Esophagus squamous epithelium (tissue), 5 donors: ENCODE measurements at regions of chr4 and their contacts with region 1.

Region 1: DNA sequence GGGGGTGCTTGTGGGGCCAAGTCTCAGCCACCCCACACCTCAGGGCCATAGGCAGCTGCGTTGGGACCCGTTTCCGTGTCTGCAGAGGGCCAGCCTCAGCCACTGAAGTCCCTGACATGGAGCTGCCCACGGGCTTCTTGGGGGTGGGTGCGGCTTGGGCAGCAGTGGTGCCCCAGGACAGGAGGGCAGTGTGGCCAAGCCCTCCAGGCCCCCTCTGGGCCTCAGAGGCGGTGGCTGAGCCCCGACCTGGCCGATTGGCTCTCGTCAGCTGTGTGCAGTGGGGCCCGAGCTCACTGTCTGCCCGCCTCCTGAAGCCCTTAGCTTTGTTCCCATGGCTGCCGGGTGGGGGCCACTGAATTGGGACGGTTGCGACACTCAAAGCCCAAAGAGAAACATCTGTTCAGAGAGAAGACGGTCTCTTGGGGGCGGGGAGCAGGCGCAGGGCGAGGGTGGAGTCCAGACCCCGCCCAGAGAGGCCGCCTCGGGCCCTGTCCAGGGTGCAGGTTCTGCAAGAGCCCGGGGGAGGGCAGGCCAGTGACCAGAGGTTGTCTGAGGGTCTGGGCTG is 9.1 kb downstream of the FGFR3 start:
- DNase-seq: no peak
- H3K4me3 ChIP-seq: no peak overlapping the region
- H3K27ac ChIP-seq: peak overlapping the region in 1 of 4 donors; percentile 13
- H3K4me1 ChIP-seq: peaks cover 0 to 71% (median 17%) of the 10 kb centered on the region in 3 donors
- H3K27me3 ChIP-seq: peaks cover 0 to 25% (median 0%) of the 10 kb centered on the region in 4 donors
- CTCF ChIP-seq: no peak
- POLR2A ChIP-seq: no peak

Region 2: DNA sequence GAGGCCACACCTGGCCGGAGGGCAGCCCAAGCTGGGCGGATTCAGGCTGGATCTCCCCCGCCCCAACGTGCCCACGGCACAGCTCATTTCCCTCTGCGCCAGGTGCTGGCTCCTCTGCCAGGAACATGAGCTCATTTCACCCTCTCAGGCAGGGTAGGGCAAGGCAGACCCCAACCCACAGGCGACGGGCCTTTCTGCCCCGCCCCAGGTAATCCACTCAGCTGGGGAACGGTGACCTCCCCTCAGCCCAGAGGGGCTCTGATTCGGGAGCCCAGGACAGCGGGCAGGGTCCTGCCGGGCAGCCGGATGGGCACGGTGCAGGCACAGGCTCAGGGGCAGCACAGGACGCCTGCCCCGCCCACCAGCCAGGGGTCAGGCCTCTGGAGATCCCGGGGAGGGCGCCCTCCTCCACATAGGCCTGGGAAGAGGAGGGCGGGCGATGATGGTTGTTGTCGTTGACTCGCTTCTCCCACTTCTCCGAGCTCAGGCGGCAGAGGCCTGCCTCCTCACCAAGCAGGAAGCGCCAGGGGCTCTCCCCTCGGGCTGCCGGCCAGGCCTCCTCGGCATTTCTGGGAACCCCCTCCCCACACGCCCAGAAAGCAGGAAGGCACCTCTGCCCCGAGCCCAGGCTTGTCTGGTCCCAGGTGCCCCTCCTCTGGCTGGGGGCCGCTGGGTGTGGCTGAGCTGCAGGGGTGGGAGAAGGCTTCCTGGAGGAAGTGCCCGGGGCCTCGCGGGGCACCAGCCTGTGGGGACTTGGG is 49.8 kb before region 1 on chr4:
- intact Hi-C with region 1: loop called (anchors 5 kb)
- DNase-seq: no peak
- H3K4me3 ChIP-seq: peak overlapping the region in 3 of 4 donors; percentile 2 to 37 (median 9)
- H3K27ac ChIP-seq: peak overlapping the region; percentile 82 to 94 (median 90)
- H3K4me1 ChIP-seq: peaks cover 71 to 93% (median 71%) of the 10 kb centered on the region in 3 donors
- H3K27me3 ChIP-seq: peaks cover 0 to 5% (median 0%) of the 10 kb centered on the region in 4 donors
- CTCF ChIP-seq: peak in 3 of 6 experiments; percentile 7 to 33 (median 29)
- POLR2A ChIP-seq: no peak

Region 3: DNA sequence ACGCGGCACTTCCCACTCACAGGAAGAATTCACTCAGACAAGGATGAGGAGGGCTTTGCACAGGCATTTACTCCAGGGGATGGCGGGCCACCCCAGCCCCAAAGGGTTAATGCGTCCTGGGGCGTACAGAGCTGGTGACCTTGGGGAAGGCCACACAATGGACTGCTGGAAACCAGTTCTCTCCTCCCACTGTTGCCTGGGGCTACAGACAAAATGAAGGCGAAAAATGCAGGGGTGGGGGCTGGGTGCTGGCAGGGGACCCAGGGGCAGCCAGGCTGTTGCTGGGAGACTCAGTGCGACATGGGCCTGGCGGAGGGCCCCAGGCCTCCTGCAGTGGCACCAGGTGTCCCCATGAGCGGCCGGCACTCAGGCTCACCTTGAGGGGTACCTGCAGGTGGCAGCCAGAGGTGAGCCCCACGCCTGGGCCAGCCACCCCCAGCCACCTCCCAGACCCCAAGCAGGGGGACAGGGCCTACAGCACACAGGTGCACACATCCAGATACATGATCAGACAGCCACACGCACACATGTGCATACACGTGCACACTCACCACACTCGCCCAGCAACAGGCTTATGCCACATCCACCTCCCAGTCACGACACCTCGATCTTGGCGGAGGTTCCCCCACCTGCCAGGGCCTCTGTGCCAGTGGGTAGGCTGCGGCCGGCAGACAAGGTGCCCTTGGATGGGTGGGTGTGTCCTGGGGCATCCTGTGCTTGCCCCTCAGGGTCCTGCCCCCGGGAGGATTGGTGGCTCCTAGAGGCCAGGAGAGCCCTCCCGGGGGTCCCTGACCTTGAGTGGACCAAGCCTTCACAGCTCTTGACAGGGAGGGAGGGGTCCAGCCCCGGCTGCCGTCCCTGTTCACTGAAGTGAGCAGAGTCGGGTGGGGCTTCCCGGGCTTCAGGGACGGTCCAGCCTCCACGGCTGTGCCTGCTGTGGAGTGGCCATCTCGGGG is 270.0 kb after region 1 on chr4:
- intact Hi-C with region 1: no loop called
- DNase-seq: no peak
- H3K4me3 ChIP-seq: no peak overlapping the region
- H3K27ac ChIP-seq: no peak overlapping the region
- H3K4me1 ChIP-seq: no peaks in the 10 kb centered on the region
- H3K27me3 ChIP-seq: peaks cover 0 to 41% (median 0%) of the 10 kb centered on the region in 4 donors
- CTCF ChIP-seq: no peak
- POLR2A ChIP-seq: no peak

Region 4: DNA sequence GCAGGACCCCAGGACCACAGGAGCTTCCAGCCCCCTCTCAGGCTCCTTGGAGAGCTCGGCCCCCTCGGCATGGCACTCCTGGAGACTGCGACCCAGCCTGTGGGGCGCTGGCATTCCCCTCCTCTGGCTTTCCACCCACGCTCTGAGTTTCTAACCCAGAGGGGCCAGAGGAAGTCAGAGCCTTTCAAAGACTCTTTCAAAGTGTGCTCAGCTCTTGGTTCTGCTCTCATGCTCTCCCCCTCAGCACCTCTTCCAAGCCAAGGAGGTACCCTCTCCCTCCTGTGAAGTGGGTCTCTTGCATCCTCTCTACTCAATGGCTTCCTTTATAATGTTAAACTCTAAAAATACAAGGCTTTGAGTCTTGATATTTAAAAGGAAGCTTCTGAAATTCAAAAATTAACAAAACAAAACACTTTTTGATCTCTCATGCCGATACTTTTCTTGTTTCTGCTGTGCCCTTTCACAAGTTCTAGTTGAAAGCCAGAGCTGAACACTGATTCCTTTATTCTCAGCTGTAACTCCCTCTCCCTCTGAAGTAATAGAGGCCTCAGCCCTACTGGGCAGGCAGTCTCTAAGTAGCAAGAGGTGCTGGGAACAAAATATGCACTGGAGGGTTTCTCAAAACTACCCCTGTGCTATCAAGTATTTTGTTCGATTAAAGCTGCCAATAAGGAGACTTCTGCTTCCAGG is 339.7 kb after region 1 on chr4:
- intact Hi-C with region 1: no loop called
- DNase-seq: no peak
- H3K4me3 ChIP-seq: no peak overlapping the region
- H3K27ac ChIP-seq: no peak overlapping the region
- H3K4me1 ChIP-seq: no peaks in the 10 kb centered on the region
- H3K27me3 ChIP-seq: no peaks in the 10 kb centered on the region
- CTCF ChIP-seq: no peak
- POLR2A ChIP-seq: no peak